MCF 10A (cell line): ENCODE measurements at regions of chr9 and their contacts with region 1.

Region 1: GRCh38 chr9:121545875-121546423 is 46.3 kb upstream of the GGTA1 start:
- DNase-seq: peak; percentile 97
- H3K4me3 Mint-ChIP-seq: peak overlapping the region; percentile 33
- H3K27ac Mint-ChIP-seq: peak overlapping the region; percentile 19
- H3K4me1 Mint-ChIP-seq: no peaks in the 10 kb centered on the region
- H3K27me3 Mint-ChIP-seq: no peaks in the 10 kb centered on the region
- CTCF ChIP-seq: peak; percentile 96

Region 2: GRCh38 chr9:121557581-121558447 is 11.9 kb after region 1 on chr9:
- CTCF ChIA-PET with region 1: interaction called, 59 read pairs
- POLR2A ChIA-PET with region 1: interaction called, 6 read pairs
- intact Hi-C with region 1: no loop called
- DNase-seq: peak; percentile 86
- H3K4me3 Mint-ChIP-seq: no peak overlapping the region
- H3K27ac Mint-ChIP-seq: no peak overlapping the region
- H3K4me1 Mint-ChIP-seq: peaks cover 27% of the 10 kb centered on the region
- H3K27me3 Mint-ChIP-seq: no peaks in the 10 kb centered on the region
- CTCF ChIP-seq: no peak

Region 3: DNA sequence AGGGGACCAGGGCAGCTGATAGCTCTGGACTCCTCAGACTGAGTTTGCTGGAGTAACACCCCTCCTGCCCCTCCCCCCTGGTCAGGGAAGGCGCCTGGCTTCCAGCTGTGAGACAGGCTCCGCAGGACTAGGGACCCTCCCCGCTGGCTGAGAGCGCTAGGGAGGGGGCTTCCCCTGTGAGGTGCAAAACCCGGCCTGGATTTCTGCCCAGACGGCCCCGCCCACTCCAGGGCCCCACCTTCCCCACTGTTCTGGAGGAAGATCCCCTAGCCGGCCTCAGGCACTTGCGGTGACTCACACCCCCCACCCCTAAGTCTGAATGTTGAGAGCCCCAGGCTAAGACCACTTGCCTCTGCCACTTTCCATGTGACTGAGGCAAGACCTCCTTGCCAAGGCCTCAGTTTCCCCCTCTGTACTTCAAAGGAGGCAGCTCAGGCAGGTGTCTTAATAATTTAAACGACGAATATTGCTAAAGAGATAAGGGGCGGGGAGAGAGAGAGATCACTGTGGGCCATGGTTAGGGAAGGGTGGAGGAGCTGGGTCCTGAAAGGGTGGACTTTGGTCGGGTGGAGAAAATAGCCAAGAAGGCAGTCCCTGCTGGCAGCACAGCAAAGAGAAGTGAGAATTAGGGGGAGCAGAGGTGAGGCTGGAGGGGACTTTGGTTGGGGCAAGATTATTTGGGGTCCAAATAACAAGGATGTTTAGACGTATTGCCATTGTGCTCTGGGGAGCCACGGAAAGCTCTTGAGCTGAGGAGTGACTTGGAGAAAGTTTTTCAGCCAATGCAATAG is 104.5 kb after region 1 on chr9:
- CTCF ChIA-PET with region 1: no interaction called
- POLR2A ChIA-PET with region 1: no interaction called
- intact Hi-C with region 1: no loop called
- DNase-seq: peak; percentile 48
- H3K4me3 Mint-ChIP-seq: peak overlapping the region; percentile 45
- H3K27ac Mint-ChIP-seq: no peak overlapping the region
- H3K4me1 Mint-ChIP-seq: peaks cover 9% of the 10 kb centered on the region
- H3K27me3 Mint-ChIP-seq: peaks cover 29% of the 10 kb centered on the region
- CTCF ChIP-seq: no peak

Region 4: DNA sequence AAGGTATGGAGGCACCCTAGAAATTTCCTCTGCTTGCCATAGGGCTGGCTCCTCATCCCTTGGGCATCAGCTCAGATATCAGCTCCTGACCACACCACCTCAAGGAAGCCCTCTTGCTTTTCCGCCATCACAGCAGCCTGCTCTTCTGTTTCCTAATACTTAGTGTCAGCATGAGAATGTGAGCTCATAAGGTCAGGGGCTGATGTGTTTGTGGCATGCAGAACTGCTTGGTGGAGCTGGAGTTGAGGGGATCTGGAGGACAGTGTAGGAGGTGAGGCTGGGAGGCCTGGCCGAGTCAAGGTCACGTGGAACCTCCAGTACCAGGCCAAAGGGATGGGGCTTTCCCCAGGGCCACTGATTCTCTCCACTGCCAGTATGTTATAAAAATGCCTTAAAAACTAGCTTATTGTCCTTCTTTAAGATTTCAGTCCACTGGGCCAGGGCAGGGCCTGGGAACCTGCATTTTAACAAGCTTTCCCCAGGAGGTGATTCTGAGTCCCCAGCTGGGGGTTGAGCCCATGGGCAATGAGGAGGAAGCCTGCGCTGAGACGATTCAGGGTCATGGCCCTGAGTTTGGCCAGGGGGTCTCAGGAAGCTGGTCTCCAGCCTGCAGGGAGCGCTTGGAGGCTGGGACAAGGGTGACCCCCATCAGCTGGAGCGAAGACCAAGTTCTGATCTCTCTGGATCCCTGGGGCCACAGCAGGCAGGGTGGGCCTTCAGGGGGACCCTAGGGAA is 134.1 kb after region 1 on chr9:
- CTCF ChIA-PET with region 1: interaction called, 45 read pairs
- POLR2A ChIA-PET with region 1: interaction called, 5 read pairs
- intact Hi-C with region 1: no loop called
- DNase-seq: no peak
- H3K4me3 Mint-ChIP-seq: no peak overlapping the region
- H3K27ac Mint-ChIP-seq: no peak overlapping the region
- H3K4me1 Mint-ChIP-seq: peaks cover 3% of the 10 kb centered on the region
- H3K27me3 Mint-ChIP-seq: no peaks in the 10 kb centered on the region
- CTCF ChIP-seq: no peak

Region 5: DNA sequence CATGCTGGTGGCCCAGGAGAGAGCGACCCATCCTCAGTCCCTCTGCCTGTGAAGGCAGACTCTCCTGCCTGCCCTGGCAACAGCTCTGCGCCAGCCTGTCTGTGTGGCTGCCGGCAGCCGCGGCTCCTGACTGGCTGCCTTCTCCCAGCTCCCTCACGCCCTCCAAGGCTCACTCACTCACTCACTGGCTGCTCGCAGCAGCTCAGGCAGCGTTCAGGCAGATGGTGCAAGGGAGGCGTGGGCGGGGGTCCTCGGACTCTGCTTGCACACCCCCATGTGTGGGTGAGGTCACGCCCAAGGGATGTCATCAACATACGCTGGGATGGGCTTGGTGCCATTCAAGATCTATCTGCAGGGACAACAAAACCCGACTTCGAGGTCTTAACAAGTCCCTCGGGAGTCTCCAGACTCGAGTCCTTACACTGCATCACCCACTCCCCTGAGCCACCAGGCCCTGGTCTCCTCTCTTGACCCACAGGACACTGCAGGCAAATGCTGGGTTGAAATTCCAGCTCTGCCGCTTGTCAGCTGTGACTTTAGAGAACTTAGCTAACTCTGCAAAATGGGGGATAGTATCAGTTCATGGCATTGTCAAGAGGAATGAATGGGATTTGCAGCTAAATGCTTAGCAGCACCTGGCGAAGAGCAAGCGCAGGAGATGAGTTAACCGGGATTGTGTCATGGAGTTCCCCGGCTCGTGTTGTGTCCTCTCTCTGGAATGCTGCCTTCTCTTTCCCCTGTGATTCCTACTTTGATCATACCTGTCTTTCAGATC is 172.3 kb after region 1 on chr9:
- CTCF ChIA-PET with region 1: interaction called, 14 read pairs
- POLR2A ChIA-PET with region 1: no interaction called
- intact Hi-C with region 1: no loop called
- DNase-seq: no peak
- H3K4me3 Mint-ChIP-seq: no peak overlapping the region
- H3K27ac Mint-ChIP-seq: peak overlapping the region; percentile 63
- H3K4me1 Mint-ChIP-seq: peaks cover 35% of the 10 kb centered on the region
- H3K27me3 Mint-ChIP-seq: no peaks in the 10 kb centered on the region
- CTCF ChIP-seq: no peak

Region 6: DNA sequence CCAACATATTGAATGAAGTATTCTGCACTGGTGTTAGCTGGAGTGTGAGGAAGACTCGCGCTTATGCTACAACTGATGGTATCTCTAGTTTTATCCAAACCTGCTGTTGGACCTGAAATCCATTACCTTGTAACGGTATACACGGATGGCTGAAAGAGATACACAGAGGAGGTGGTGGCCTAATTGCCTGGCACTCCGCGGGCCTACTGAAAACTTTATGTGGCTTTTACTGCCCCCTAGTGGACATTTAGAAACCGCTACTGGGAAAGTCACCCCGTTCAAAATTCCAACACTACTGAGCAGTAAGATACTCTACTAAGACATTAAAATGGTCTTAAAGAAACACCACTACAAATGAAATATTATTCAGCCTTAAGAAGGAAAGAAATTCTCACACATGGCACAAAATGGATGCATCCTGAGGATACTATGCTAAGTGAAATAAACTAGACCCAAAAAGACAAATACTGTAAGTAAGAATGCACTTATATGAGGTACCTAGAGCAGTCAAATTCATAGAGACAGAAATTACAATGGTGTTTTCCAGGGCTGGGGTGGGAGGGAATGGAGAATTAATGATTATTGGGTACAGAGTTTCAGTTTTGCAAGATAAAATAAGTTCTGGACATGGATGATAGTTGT is 446.7 kb after region 1 on chr9:
- CTCF ChIA-PET with region 1: interaction called, 35 read pairs
- POLR2A ChIA-PET with region 1: interaction called, 3 read pairs
- intact Hi-C with region 1: loop called (anchors 1 kb)
- DNase-seq: peak; percentile 83
- H3K4me3 Mint-ChIP-seq: no peak overlapping the region
- H3K27ac Mint-ChIP-seq: no peak overlapping the region
- H3K4me1 Mint-ChIP-seq: peaks cover 5% of the 10 kb centered on the region
- H3K27me3 Mint-ChIP-seq: no peaks in the 10 kb centered on the region
- CTCF ChIP-seq: peak; percentile 56

Region 7: GRCh38 chr9:122092611-122093506 is 546.9 kb after region 1 on chr9 and contains the start of gene TTLL11:
- CTCF ChIA-PET with region 1: interaction called, 4 read pairs
- POLR2A ChIA-PET with region 1: no interaction called
- intact Hi-C with region 1: loop called (anchors 10 kb)
- DNase-seq: peak; percentile 95
- H3K4me3 Mint-ChIP-seq: peak within 1 kb of the TSS; percentile 91
- H3K27ac Mint-ChIP-seq: peak within 1 kb of the TSS; percentile 57
- H3K4me1 Mint-ChIP-seq: peaks cover 33% of the 10 kb centered on the region
- H3K27me3 Mint-ChIP-seq: no peaks in the 10 kb centered on the region
- CTCF ChIP-seq: no peak
- total RNA-seq, gene TTLL11: 9.0 and 13.6 TPM in 2 replicates